ENCODE measurements at regions of chr19 and their contacts with region 1.

Region 1: DNA sequence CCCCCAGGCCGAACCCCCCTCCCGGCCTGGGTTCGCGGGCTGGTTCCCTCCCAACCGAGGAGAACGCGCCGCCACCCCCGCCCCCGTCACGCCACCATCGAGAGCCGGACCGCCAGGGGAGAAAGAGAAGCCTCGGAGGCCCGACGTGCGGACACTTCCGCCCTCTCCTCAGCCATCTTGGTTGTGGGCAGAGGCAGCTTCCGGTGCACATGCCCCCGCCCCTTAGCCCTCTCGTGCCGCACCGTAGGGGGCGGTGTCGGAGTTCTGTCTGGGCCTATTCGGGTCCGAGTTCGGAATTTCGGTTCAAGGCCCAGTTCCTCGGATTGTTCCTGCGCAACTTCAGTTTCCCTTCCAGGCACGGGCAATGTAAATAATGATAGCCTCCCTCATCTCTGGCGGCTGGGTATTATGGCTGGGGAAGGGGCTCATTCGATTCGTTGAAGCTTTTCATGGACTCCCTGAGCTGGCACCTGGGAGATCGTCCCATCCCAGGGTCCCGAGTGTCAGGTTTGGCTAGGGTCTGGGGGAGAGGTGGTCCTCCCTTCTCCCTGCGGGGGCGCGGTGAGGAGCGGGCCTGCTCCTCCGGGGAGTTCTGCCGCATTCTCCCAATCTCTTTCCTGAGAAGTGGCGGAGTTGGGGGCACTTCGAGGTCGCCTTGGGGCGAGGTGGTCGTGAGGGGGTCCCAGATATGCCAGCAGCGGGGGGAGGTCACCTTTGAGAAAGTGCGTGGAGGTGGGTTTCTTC is at the starts of genes IER2 and STX10:
- DNase-seq: peak; percentile 90 to 96 (median 91)
- H3K4me3 ChIP-seq: peak within 1 kb of the TSS; percentile 81 to 98
- H3K4me3 Mint-ChIP-seq: peak within 1 kb of the TSS; percentile 95 to 99 (median 99)
- H3K27ac ChIP-seq: peak within 1 kb of the TSS; percentile 98
- H3K27ac Mint-ChIP-seq: peak within 1 kb of the TSS; percentile 95 to 99 (median 98)
- H3K4me1 ChIP-seq: peaks cover 17% of the 10 kb centered on the region
- H3K4me1 Mint-ChIP-seq: peaks cover 10 to 54% (median 22%) of the 10 kb centered on the region in 4 donors
- H3K27me3 ChIP-seq: no peaks in the 10 kb centered on the region
- H3K27me3 Mint-ChIP-seq: peaks cover 0 to 3% of the 10 kb centered on the region in 2 donors
- total RNA-seq, gene IER2: 148 to 153 TPM
- total RNA-seq, gene STX10: 63.7 to 64.0 TPM

Region 2: DNA sequence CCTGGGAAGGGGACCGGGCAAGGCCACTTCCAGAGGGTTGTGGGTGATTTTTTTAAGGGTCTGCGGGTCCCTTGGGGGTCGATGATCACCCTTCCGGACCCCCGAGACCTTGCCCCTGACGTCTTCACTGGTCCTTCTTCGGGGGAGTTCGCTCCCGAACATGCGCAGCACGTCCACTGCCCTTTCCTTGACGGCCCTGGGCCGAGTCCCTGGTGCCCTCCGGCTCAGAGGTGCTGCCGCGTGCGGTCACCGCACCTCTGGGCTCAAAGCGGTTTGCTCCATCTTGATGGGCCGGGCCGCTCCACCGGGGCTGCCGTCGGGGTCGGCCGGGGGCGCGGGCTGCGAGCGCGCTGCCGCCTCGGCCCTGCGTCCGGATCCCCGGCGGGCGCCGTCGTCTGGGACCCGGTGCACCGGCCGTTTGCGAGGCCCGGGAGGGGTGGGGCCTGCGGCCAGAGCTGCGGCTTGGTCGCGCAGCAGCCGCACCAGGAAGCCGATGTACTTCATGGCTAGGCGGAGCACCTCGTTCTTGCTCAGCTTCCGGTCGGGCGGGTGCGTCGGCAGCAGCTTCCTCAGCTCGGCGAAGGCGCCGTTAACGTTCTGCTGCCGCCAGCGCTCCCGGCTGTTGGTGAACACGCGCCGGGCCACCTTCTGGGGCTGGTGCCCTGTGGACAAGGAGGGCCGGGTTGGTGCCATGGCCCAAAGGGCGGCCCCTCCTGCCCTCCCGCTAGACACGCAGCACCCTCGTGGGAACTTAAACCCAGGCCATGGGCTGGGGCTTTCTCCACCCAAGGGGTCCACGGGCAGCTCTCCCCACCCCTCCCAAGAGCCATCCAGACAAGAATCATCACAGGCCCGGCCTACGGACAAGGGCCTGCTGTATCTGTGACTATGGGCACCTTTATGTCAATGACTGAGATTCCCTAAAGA is 51.0 kb before region 1 on chr19:
- CTCF ChIA-PET with region 1: interaction called, 6 read pairs
- POLR2A ChIA-PET with region 1: interaction called, 39 read pairs
- intact Hi-C with region 1: loop called (anchors 1 kb)
- DNase-seq: peak; percentile 82 to 88 (median 84)
- H3K4me3 ChIP-seq: peak overlapping the region; percentile 58 to 70
- H3K4me3 Mint-ChIP-seq: peak overlapping the region; percentile 84 to 92 (median 87)
- H3K27ac ChIP-seq: peak overlapping the region; percentile 78
- H3K27ac Mint-ChIP-seq: peak overlapping the region; percentile 84 to 99 (median 97)
- H3K4me1 ChIP-seq: peaks cover 87% of the 10 kb centered on the region
- H3K4me1 Mint-ChIP-seq: peaks cover 29 to 81% (median 48%) of the 10 kb centered on the region in 4 donors
- H3K27me3 ChIP-seq: peaks cover 15% of the 10 kb centered on the region
- H3K27me3 Mint-ChIP-seq: peaks cover 5 to 10% of the 10 kb centered on the region in 2 donors

Region 3: DNA sequence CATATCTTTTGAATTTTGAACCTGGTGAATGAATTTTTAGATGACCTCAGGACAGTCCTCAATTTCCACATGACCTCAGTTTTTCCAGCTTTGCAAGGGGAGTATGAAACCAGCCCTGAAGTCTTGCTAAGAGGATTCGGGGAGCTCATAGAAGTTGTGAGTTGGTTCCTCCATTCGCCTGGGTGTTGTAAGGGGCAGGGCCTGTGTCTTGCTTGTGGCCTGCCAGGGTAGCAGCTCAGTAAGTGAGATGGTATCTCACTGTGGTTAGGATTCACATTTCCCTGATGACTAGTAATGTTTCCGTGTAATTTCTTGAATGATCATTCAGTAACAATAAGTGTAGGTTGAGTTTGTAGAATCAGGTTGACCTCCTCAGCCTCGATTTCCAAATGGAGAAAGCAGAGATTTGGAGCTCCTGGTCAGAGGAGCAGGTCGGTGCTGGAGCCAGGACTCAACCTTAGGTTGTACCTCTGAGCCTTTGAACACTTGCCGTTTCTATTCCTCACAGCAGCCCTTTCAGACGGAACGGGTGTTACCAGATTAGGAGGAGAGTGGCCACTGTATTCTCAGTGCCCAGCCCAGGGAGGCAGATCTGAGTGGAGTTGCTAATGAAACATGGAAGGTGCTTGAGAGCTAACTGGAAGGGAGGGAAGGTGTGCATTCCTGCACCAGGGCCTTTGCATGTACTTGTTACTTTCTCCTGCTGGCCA is 17.7 kb before region 1 on chr19:
- CTCF ChIA-PET with region 1: no interaction called
- POLR2A ChIA-PET with region 1: interaction called, 11 read pairs
- intact Hi-C with region 1: no loop called
- DNase-seq: peak; percentile 52 to 83 (median 61)
- H3K4me3 ChIP-seq: peak overlapping the region in 1 of 2 donors; percentile 1
- H3K4me3 Mint-ChIP-seq: peak overlapping the region; percentile 31 to 82 (median 65)
- H3K27ac ChIP-seq: no peak overlapping the region
- H3K27ac Mint-ChIP-seq: peak overlapping the region; percentile 66 to 90 (median 79)
- H3K4me1 ChIP-seq: peaks cover 34% of the 10 kb centered on the region
- H3K4me1 Mint-ChIP-seq: peaks cover 25 to 42% (median 30%) of the 10 kb centered on the region in 4 donors
- H3K27me3 ChIP-seq: no peaks in the 10 kb centered on the region
- H3K27me3 Mint-ChIP-seq: no peaks in the 10 kb centered on the region

Region 4: GRCh38 chr19:13187419-13187818 is 37.1 kb after region 1 on chr19:
- CTCF ChIA-PET with region 1: interaction called, 5 read pairs
- POLR2A ChIA-PET with region 1: interaction called, 146 read pairs
- intact Hi-C with region 1: no loop called
- DNase-seq: no peak
- H3K4me3 ChIP-seq: no peak overlapping the region
- H3K4me3 Mint-ChIP-seq: peak overlapping the region in 3 of 8 donors; percentile 5 to 69 (median 13)
- H3K27ac ChIP-seq: no peak overlapping the region
- H3K27ac Mint-ChIP-seq: peak overlapping the region in 4 of 7 donors; percentile 35 to 79 (median 54)
- H3K4me1 ChIP-seq: peaks cover 17% of the 10 kb centered on the region
- H3K4me1 Mint-ChIP-seq: peaks cover 8 to 37% (median 25%) of the 10 kb centered on the region in 4 donors
- H3K27me3 ChIP-seq: no peaks in the 10 kb centered on the region
- H3K27me3 Mint-ChIP-seq: no peaks in the 10 kb centered on the region

Region 5: DNA sequence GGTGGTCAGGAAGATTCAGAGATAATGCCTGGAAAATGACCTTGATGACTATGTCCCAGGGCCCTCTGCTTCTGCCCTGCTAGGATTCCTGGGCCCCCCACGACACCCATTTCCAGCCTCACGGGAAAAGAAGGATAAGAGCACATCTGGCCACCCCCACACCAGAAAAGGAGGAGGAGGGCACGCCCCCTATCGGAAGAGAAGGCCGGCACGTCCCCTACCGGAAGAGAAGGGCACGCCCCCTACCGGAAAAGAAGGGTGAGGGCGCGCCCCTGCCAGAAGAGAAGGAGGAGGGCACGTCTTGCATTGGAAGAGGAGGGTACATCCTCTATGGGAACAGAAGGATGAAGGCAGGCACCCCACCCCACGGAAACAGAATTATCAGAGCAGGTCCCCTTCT is 84.2 kb after region 1 on chr19:
- CTCF ChIA-PET with region 1: interaction called, 3 read pairs
- POLR2A ChIA-PET with region 1: interaction called, 4 read pairs
- intact Hi-C with region 1: loop called (anchors 1 kb)
- DNase-seq: peak; percentile 41 to 66 (median 56)
- H3K4me3 ChIP-seq: no peak overlapping the region
- H3K4me3 Mint-ChIP-seq: peak overlapping the region; percentile 7 to 82 (median 46)
- H3K27ac ChIP-seq: no peak overlapping the region
- H3K27ac Mint-ChIP-seq: peak overlapping the region in 2 of 7 donors; percentile 60 to 87
- H3K4me1 ChIP-seq: peaks cover 13% of the 10 kb centered on the region
- H3K4me1 Mint-ChIP-seq: peaks cover 7 to 13% (median 13%) of the 10 kb centered on the region in 4 donors
- H3K27me3 ChIP-seq: no peaks in the 10 kb centered on the region
- H3K27me3 Mint-ChIP-seq: peaks cover 2 to 3% of the 10 kb centered on the region in 2 donors

Region 6: DNA sequence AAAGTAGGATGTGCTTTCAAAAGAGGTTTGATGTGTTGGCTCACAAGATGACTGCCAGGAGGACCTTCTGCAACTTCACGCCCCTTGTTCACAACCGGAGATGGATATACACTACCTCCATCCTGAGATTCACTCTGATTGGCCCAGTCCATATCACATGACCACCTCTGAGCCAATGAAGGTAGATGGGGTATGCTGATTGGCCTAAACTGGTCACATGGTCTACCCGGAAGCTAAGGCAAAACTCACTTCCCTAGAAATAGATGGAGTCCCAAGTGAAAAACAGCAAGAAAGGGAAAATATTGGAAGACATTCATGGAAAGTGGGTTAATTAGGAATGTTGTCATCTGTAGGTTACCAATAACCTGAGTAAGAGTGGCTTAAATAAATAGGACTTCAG is 494.3 kb after region 1 on chr19:
- CTCF ChIA-PET with region 1: no interaction called
- POLR2A ChIA-PET with region 1: no interaction called
- intact Hi-C with region 1: no loop called
- DNase-seq: no peak
- H3K4me3 ChIP-seq: no peak overlapping the region
- H3K4me3 Mint-ChIP-seq: no peak overlapping the region
- H3K27ac ChIP-seq: no peak overlapping the region
- H3K27ac Mint-ChIP-seq: no peak overlapping the region
- H3K4me1 ChIP-seq: no peaks in the 10 kb centered on the region
- H3K4me1 Mint-ChIP-seq: no peaks in the 10 kb centered on the region
- H3K27me3 ChIP-seq: no peaks in the 10 kb centered on the region
- H3K27me3 Mint-ChIP-seq: peaks cover 10 to 15% of the 10 kb centered on the region in 2 donors

Region 7: DNA sequence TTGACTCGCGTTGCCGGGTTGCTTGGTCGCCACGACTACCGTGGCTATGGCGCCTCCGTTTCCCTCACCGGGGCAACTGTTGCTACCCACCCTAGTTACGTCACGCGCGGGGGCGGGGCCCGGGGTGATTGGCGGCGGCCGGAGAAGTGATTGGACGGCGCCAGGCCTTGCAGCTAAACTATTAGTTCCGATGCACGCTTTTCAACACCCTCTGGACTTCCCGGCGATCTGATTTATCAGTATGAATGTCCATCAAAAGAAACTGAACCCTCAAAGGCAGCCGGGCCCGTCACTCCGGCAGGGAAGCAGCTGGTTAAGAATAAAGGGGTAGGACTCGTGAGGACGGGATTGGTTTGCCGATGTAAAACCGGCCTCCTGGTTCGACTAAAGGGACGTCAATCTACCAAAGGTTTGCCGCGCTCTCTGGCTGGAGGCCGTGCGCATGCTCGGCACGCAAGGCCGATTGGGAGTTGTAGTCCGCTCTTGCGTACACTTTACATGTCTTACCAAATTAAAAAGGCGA is 855.9 kb after region 1 on chr19 and contains the start of gene RFX1:
- CTCF ChIA-PET with region 1: no interaction called
- POLR2A ChIA-PET with region 1: no interaction called
- intact Hi-C with region 1: loop called (anchors 2 kb)
- DNase-seq: peak; percentile 100
- H3K4me3 ChIP-seq: peak within 1 kb of the TSS; percentile 58 to 82
- H3K4me3 Mint-ChIP-seq: peak within 1 kb of the TSS; percentile 91 to 98 (median 96)
- H3K27ac ChIP-seq: peak within 1 kb of the TSS; percentile 99
- H3K27ac Mint-ChIP-seq: peak within 1 kb of the TSS; percentile 97 to 100 (median 100)
- H3K4me1 ChIP-seq: peaks cover 47% of the 10 kb centered on the region
- H3K4me1 Mint-ChIP-seq: peaks cover 29 to 51% (median 39%) of the 10 kb centered on the region in 4 donors
- H3K27me3 ChIP-seq: no peaks in the 10 kb centered on the region
- H3K27me3 Mint-ChIP-seq: peaks cover 0 to 2% of the 10 kb centered on the region in 2 donors
- total RNA-seq, gene RFX1: 17.4 to 17.8 TPM

Measured in CD4-positive, alpha-beta memory T cell (primary cell).